HEK293 (cell line): ENCODE measurements at regions of chr21 and their contacts with region 1.

Region 1: DNA sequence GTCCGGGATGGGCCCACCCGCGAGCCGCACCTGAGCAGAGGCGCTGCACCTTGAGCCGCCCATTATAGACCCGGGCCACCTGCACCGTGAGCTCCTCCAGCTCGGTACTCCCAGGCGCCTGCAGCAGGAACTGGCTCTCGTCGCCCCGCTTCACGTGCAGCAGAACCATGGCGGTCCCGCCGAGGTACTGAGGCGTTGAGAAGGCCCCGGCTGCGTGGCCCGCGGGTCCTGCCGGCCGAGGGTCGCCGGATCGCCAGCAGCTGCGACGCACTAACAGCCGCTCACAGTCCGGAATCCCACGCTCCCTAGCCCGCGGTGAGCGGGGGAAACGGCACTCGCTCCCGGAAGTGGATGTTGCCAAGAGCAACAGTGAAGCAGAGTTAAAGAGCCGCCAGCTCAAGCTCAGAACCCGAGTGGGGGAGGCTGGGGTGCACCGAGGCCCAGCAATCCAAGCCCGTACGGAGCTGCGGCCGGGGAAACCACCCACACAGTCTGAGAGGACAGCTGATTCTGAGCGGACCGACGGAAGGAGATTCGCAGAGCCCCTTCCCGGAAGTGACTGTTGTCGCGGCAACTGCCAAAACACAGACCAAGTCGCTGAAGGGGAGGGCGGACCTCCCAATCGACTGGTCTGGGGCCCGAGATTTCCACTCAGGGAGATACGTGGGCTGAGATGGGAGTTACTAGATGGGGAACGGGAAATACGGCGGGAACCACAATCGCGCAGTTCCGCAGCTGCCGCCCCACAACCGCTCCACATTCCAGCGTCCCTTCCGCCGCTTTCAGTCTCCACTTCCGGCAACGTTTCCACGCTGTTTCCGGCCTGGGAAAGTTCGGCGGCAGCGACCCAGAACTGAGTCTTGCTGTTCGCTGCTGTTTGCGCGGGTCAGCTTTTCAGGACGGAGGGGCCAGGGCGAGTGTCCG is at the start of gene CFAP298:
- H3K4me3 ChIP-seq: peak within 1 kb of the TSS; percentile 84
- H3K27ac ChIP-seq: peak within 1 kb of the TSS; percentile 69
- H3K4me1 ChIP-seq: no peaks in the 10 kb centered on the region
- CTCF ChIP-seq: 0 out of 2 replicates have a peak, but pooled peaks have one; percentile 17

Region 2: GRCh38 chr21:32392880-32393676 is 219.3 kb before region 1 on chr21 and contains the start of gene URB1:
- CTCF ChIA-PET with region 1: interaction called, 4 read pairs
- POLR2A ChIA-PET with region 1: interaction called, 15 read pairs
- H3K4me3 ChIP-seq: peak within 1 kb of the TSS; percentile 95
- H3K27ac ChIP-seq: peak within 1 kb of the TSS; percentile 37; the same call in 1 of the 2 replicates
- H3K4me1 ChIP-seq: peaks cover 8% of the 10 kb centered on the region
- CTCF ChIP-seq: no peak; the same call in 1 of the 2 replicates

Region 3: DNA sequence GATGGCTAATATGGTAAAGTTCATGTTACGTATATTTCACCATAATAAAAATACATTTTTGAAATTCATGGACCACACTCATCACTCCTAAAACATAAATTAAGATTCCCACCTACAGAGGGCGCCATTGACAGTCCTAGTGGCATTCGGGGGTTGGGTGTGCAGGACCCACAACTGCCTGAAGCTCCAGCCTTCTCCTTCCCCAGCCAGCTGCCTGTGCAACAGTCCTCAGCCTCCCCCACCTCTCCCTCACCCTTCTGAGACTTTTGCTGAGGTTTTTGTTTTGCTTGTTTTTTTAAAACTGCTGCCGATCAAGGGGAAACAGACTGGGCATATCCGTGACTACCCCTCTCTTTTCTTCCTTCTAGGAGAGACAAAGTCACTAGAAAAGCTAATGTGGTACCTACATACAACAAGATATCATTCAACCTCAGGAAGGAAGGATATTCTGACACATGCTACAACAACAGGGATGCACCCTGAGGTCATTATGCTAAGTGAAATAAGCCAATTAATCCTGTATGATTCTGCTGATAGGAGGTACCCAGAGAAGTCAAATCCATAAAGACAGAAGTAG is 209.0 kb before region 1 on chr21:
- CTCF ChIA-PET with region 1: interaction called, 12 read pairs
- POLR2A ChIA-PET with region 1: interaction called, 3 read pairs
- H3K4me3 ChIP-seq: no peak overlapping the region
- H3K27ac ChIP-seq: no peak overlapping the region
- H3K4me1 ChIP-seq: no peaks in the 10 kb centered on the region
- CTCF ChIP-seq: peak; percentile 70

Region 4: DNA sequence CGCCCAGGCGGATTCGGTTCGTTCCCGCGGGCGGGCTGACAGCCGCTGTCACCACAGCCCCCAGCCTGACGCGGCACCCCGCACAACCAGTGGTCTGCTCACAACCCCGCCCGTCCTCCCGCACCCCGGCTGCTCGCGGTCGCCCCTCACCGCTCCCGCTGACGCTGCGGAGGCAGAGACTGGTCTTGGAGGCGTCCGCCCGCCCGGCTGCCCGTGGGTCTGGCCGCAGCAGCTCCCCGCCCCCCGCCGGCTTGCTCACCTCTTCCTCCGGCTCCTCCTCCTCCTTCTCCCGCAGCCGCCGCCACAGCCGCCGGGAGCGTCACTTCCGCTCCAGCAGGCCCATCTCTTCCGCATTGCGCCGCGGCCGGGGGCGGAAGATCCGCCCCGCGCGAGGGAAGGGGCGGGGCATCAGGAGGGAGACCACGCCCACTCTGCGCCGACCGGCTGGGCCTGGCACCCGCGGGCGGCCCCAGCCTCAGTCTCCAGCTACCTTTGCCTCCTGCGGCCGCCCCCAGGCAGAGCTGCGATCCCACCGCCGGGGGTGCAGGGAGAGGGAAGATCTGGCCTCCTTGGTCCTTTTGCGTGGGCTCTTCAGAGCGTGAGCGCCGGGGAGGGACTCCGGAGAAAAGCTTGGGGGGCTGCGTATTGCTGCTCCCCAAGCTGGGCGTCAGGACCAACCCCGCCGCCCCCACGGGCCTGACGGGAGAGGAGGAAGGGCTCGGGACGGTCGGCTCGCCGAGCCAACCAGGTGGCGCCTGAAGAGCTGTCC is 115.5 kb after region 1 on chr21 and contains the start of gene SYNJ1:
- CTCF ChIA-PET with region 1: interaction called, 3 read pairs
- POLR2A ChIA-PET with region 1: interaction called, 14 read pairs
- H3K4me3 ChIP-seq: peak within 1 kb of the TSS; percentile 90
- H3K27ac ChIP-seq: peak within 1 kb of the TSS; percentile 65
- H3K4me1 ChIP-seq: 0 out of 2 replicates have a peak, but pooled peaks cover 4% of the 10 kb centered on the region
- CTCF ChIP-seq: peak; percentile 54

Region 5: DNA sequence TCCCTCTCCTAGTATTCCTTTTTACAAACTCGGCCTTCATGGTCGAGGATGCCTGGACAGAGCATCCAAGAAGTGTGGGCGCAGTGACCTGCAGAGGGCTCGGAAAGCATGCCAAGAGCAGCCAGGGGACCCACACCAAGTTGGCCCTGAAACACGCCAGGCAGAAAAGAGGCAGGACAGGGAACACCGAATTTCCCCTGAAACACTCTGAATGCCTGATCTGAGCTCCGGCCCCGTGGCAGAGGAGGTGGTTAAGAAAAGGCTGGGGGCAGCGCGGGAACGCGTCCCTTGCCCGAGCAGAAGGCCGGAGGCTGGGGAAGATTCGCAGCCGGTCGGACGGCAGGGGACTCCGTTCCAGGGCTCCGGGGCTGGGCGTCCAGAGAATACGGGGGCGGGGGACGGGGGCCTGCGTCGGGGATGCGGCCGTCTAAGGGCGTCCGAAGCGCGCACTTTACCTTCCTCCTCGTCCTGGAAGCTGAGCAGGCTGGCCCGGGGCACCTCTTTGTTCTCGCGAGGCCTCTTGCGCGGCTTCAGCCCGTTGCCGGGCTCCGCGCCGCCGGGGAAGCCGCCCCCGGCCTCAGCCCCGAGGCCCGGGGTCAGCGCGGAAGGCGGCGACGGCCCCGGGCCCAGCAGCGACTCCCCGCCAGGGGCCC is 158.7 kb after region 1 on chr21:
- CTCF ChIA-PET with region 1: no interaction called
- POLR2A ChIA-PET with region 1: interaction called, 10 read pairs
- H3K4me3 ChIP-seq: peak overlapping the region; percentile 84
- H3K27ac ChIP-seq: peak overlapping the region; percentile 96
- H3K4me1 ChIP-seq: peaks cover 8% of the 10 kb centered on the region
- CTCF ChIP-seq: peak; percentile 56; the same call in 1 of the 2 replicates